Activated T-helper 1 cell treated with anti-CD3 and anti-CD28 coated beads, Interleukin-12 subunit alpha, Interleukin-12 subunit beta, Interleukin-2, Interleukin-4 antibody, amounts not matched to agents 30 ng/mL and 10 ng/mL and 1 ng/mL, durations not matched to agents 14 hours and 24 hours and 36 hours (primary cell): ENCODE measurements at regions of chr3 and their contacts with region 1.

Region 1: GRCh38 chr3:56801662-56802377 is at the start of gene ARHGEF3:
- DNase-seq: peak; percentile 77
- H3K4me3 Mint-ChIP-seq: peak within 1 kb of the TSS; percentile 95
- H3K27ac Mint-ChIP-seq: peak within 1 kb of the TSS; percentile 92
- H3K4me1 Mint-ChIP-seq: peaks cover 51% of the 10 kb centered on the region
- H3K27me3 Mint-ChIP-seq: no peaks in the 10 kb centered on the region
- total RNA-seq, gene ARHGEF3: 59.2 and 64.1 TPM in 2 replicates

Region 2: GRCh38 chr3:56556908-56557830 is 244.7 kb before region 1 on chr3 and contains the start of gene CCDC66:
- intact Hi-C with region 1: loop called (anchors 5 kb)
- DNase-seq: peak; percentile 90
- H3K4me3 Mint-ChIP-seq: peak within 1 kb of the TSS; percentile 97
- H3K27ac Mint-ChIP-seq: peak within 1 kb of the TSS; percentile 99
- H3K4me1 Mint-ChIP-seq: peaks cover 38% of the 10 kb centered on the region
- H3K27me3 Mint-ChIP-seq: peaks cover 23% of the 10 kb centered on the region
- total RNA-seq, gene CCDC66: 37.7 and 40.4 TPM in 2 replicates

Region 3: GRCh38 chr3:56702490-56703315 is 99.1 kb before region 1 on chr3:
- intact Hi-C with region 1: loop called (anchors 1 kb)
- DNase-seq: no peak
- H3K4me3 Mint-ChIP-seq: no peak overlapping the region
- H3K27ac Mint-ChIP-seq: no peak overlapping the region
- H3K4me1 Mint-ChIP-seq: peaks cover 29% of the 10 kb centered on the region
- H3K27me3 Mint-ChIP-seq: no peaks in the 10 kb centered on the region

Region 4: DNA sequence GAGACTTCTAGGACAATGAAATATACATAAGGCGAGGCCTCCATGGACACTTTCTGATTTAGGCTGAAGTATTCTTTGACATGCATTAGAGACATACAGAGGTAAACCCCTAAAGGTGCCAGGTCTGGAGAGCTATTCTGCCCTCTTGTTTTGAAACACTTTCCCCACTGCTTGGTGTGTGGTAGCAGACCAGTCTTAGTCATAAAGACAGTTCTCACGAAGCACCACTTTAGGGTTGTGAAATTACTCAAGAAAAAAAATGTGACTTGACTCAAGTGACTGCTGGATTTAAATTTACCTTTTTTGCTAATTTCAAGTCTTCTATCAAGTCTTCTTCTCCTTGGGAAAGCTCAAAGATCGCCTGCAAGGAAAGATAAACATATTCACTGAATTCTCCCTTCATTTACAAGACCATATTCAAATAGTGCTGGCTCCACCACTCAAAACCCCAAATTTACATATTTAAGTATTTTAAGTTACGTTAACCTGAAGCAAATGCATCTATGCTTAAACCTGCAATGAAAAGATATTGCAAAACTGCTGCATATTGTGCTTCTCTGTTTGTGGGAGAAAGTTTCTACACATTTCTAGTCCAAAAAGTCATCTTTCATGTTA is 48.5 kb before region 1 on chr3:
- intact Hi-C with region 1: loop called (anchors 1 kb)
- DNase-seq: peak; percentile 47
- H3K4me3 Mint-ChIP-seq: peak overlapping the region; percentile 67
- H3K27ac Mint-ChIP-seq: peak overlapping the region; percentile 83
- H3K4me1 Mint-ChIP-seq: peaks cover 68% of the 10 kb centered on the region
- H3K27me3 Mint-ChIP-seq: no peaks in the 10 kb centered on the region

Region 5: DNA sequence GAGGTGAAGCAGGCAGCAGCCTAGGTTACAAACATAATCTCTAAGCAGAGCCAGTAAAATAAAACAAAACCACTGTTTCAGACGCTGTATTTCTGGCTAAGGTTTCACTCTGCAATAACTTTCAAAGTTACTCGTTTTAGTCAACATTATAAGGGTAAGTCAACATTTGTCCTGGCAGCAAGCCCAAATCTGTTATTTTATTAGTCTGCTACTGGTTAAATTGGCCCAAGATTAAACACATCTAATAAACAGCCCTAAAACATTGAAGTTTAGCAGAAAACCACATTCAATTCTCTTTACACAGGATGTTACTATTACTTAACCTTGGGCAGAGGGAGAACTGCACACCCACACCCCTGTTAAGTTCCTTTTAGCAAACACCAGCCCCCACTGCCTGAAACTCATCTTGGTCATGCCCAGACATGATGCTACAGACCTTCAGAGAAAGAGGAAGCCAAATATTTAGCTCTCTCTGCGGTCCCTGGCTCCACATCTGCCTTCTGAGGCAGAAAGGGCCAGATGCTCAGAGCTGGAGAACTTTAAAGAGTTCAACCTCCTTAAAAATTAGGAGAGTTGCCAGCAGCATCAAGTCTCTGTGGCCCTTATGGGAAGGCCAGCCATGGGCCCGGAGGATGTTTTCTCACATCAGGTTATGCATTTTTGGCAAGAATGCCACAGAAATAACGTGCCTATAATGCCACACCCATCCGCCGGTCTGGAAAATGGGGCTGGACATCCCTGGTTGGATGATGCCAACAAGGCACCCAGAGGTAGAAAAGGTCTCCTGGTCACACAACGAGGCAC is 18.0 kb before region 1 on chr3:
- intact Hi-C with region 1: loop called (anchors 1 kb)
- DNase-seq: peak; percentile 72
- H3K4me3 Mint-ChIP-seq: peak overlapping the region; percentile 81
- H3K27ac Mint-ChIP-seq: peak overlapping the region; percentile 95
- H3K4me1 Mint-ChIP-seq: peaks cover 97% of the 10 kb centered on the region
- H3K27me3 Mint-ChIP-seq: no peaks in the 10 kb centered on the region

Region 6: GRCh38 chr3:56862352-56863074 is 60.7 kb after region 1 on chr3:
- intact Hi-C with region 1: loop called (anchors 1 kb)
- DNase-seq: no peak
- H3K4me3 Mint-ChIP-seq: peak overlapping the region; percentile 38
- H3K27ac Mint-ChIP-seq: peak overlapping the region; percentile 90
- H3K4me1 Mint-ChIP-seq: peaks cover 75% of the 10 kb centered on the region
- H3K27me3 Mint-ChIP-seq: no peaks in the 10 kb centered on the region

Region 7: GRCh38 chr3:56915966-56916586 is 114.3 kb after region 1 on chr3:
- intact Hi-C with region 1: loop called (anchors 1 kb)
- DNase-seq: peak; percentile 71
- H3K4me3 Mint-ChIP-seq: peak overlapping the region; percentile 89
- H3K27ac Mint-ChIP-seq: peak overlapping the region; percentile 88
- H3K4me1 Mint-ChIP-seq: peaks cover 68% of the 10 kb centered on the region
- H3K27me3 Mint-ChIP-seq: no peaks in the 10 kb centered on the region